H1 (cell line): ENCODE measurements at regions of chr5 and their contacts with region 1.

Region 1: GRCh38 chr5:168947212-168947868 is 353.6 kb downstream of the SLIT3 start:
- DNase-seq: peak; percentile 19 to 88
- H3K4me3 ChIP-seq: no peak overlapping the region
- H3K27ac ChIP-seq: no peak overlapping the region
- H3K4me1 ChIP-seq: peaks cover 0 to 2% (median under 1%) of the 10 kb centered on the region in 4 experiments; a peak in 3 of 7 replicates
- H3K27me3 ChIP-seq: no peaks in the 10 kb centered on the region
- CTCF ChIP-seq: peak; percentile 89 to 90 (median 89)
- EP300 ChIP-seq: no peak
- POLR2A ChIP-seq: no peak
- RAD21 ChIP-seq: peak; percentile 86 to 93

Region 2: DNA sequence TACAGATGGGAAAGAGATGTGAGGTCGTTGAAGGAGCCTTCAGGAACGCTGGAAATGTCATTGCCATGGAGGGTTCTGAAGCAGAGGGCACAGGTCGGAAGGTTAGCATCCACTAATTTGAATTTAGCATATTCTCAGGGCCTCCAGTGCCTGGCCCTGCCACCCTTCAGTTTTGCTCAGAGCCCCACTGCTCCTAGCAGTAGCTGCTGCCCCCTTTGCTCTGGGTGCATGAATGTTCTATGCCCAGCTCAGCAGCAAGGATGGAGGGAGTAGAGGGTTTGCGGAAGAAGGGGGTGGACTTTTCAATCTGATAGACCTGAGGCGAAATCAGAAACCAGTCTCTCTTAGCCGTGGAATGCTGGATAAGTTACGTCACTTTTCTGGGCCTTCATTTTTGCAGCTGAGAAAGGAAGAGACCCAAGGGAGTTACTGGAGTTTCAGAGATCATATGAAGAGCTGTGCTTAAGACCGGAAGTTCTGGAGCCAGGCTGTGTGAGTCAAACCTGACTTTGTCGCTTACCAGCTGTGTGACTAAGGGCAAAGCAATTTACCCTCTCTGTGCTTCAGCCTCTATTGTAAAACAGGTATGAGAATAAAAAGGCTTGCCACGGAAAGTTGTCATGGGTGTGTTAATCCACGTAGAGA is 234.9 kb before region 1 on chr5:
- CTCF ChIA-PET with region 1: interaction called, 60 read pairs
- POLR2A ChIA-PET with region 1: no interaction called
- DNase-seq: peak in 1 of 2 experiments; percentile 1
- H3K4me3 ChIP-seq: no peak overlapping the region
- H3K27ac ChIP-seq: no peak overlapping the region
- H3K4me1 ChIP-seq: no peaks in the 10 kb centered on the region; a peak in 1 of 7 replicates
- H3K27me3 ChIP-seq: no peaks in the 10 kb centered on the region; a peak in 1 of 7 replicates
- CTCF ChIP-seq: no peak
- EP300 ChIP-seq: no peak
- POLR2A ChIP-seq: no peak
- RAD21 ChIP-seq: no peak

Region 3: GRCh38 chr5:168934169-168934568 is 13.2 kb before region 1 on chr5:
- CTCF ChIA-PET with region 1: interaction called, 13 read pairs
- POLR2A ChIA-PET with region 1: no interaction called
- DNase-seq: no peak
- H3K4me3 ChIP-seq: no peak overlapping the region
- H3K27ac ChIP-seq: no peak overlapping the region
- H3K4me1 ChIP-seq: peaks cover 0 to 5% (median 3%) of the 10 kb centered on the region in 4 experiments; a peak in 4 of 7 replicates
- H3K27me3 ChIP-seq: no peaks in the 10 kb centered on the region
- CTCF ChIP-seq: no peak
- EP300 ChIP-seq: no peak
- POLR2A ChIP-seq: no peak
- RAD21 ChIP-seq: no peak

Region 4: GRCh38 chr5:168962306-168962705 is 15.0 kb after region 1 on chr5:
- CTCF ChIA-PET with region 1: interaction called, 11 read pairs
- POLR2A ChIA-PET with region 1: no interaction called
- DNase-seq: no peak
- H3K4me3 ChIP-seq: no peak overlapping the region
- H3K27ac ChIP-seq: no peak overlapping the region
- H3K4me1 ChIP-seq: peaks cover 0 to 3% (median 1%) of the 10 kb centered on the region in 4 experiments; a peak in 1 of 7 replicates
- H3K27me3 ChIP-seq: no peaks in the 10 kb centered on the region; a peak in 1 of 7 replicates
- CTCF ChIP-seq: no peak
- EP300 ChIP-seq: no peak
- POLR2A ChIP-seq: no peak
- RAD21 ChIP-seq: no peak

Region 5: GRCh38 chr5:169243651-169244422 is 296.5 kb after region 1 on chr5:
- CTCF ChIA-PET with region 1: no interaction called
- POLR2A ChIA-PET with region 1: no interaction called
- DNase-seq: no peak
- H3K4me3 ChIP-seq: no peak overlapping the region
- H3K27ac ChIP-seq: no peak overlapping the region
- H3K4me1 ChIP-seq: no peaks in the 10 kb centered on the region
- H3K27me3 ChIP-seq: no peaks in the 10 kb centered on the region
- CTCF ChIP-seq: no peak
- EP300 ChIP-seq: no peak
- POLR2A ChIP-seq: no peak
- RAD21 ChIP-seq: no peak